Activated T-helper 2 cell treated with anti-CD3 and anti-CD28 coated beads, Interferon-gamma antibody, Interleukin-2, Interleukin-4, amounts not matched to agents 10 μg/mL and 5 μg/mL and 100 μg/mL, durations not matched to agents 14 hours and 24 hours and 36 hours (primary cell): ENCODE measurements at regions of chr6 and their contacts with region 1.

Region 1: GRCh38 chr6:36678518-36679027 is at the start of gene CDKN1A:
- DNase-seq: peak; percentile 76
- H3K4me3 Mint-ChIP-seq: peak within 1 kb of the TSS; percentile 96
- H3K27ac Mint-ChIP-seq: peak within 1 kb of the TSS; percentile 89
- H3K4me1 Mint-ChIP-seq: peaks cover 54% of the 10 kb centered on the region
- H3K27me3 Mint-ChIP-seq: peaks cover 3% of the 10 kb centered on the region
- total RNA-seq, gene CDKN1A: 43.9 and 45.3 TPM in 2 replicates

Region 2: GRCh38 chr6:36423101-36423824 is 255.3 kb before region 1 on chr6:
- intact Hi-C with region 1: loop called (anchors 1 kb)
- DNase-seq: peak; percentile 97
- H3K4me3 Mint-ChIP-seq: peak overlapping the region; percentile 88
- H3K27ac Mint-ChIP-seq: peak overlapping the region; percentile 85
- H3K4me1 Mint-ChIP-seq: peaks cover 15% of the 10 kb centered on the region
- H3K27me3 Mint-ChIP-seq: peaks cover 7% of the 10 kb centered on the region

Region 3: GRCh38 chr6:36546920-36547645 is 131.5 kb before region 1 on chr6 and contains the start of gene STK38:
- intact Hi-C with region 1: loop called (anchors 5 kb)
- DNase-seq: peak; percentile 85
- H3K4me3 Mint-ChIP-seq: peak within 1 kb of the TSS; percentile 98
- H3K27ac Mint-ChIP-seq: peak within 1 kb of the TSS; percentile 95
- H3K4me1 Mint-ChIP-seq: peaks cover 33% of the 10 kb centered on the region
- H3K27me3 Mint-ChIP-seq: no peaks in the 10 kb centered on the region
- total RNA-seq, gene STK38: 22.9 and 25.0 TPM in 2 replicates

Region 4: DNA sequence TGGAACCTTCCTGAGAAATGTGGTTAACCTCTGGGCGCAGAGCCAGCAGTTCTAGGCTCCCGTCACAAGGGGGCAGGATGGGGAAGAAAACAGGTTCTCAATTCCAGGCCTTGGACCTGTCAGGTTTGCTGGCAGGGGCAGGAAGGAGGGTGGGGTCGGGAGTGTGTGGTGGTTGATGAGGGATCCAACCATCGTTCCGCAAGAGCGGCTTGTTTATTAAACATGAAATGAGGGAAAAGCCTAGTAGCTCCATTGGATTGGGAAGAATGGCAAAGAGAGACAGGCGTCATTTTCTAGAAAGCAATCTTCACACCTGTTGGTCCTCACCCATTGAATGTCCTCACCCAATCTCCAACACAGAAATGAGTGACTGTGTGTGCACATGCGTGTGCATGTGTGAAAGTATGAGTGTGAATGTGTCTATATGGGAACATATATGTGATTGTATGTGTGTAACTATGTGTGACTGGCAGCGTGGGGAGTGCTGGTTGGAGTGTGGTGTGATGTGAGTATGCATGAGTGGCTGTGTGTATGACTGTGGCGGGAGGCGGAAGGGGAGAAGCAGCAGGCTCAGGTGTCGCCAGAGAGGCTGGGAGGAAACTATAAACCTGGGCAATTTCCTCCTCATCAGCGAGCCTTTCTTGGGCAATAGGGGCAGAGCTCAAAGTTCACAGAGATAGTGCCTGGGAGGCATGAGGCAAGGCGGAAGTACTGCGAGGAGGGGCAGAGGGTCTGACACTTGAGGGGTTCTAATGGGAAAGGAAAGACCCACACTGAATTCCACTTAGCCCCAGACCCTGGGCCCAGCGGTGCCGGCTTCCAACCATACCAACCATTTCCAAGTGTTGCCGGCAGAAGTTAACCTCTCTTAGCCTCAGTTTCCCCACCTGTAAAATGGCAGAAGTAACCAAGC is 54.8 kb before region 1 on chr6:
- intact Hi-C with region 1: loop called (anchors 1 kb)
- DNase-seq: peak; percentile 68
- H3K4me3 Mint-ChIP-seq: no peak overlapping the region
- H3K27ac Mint-ChIP-seq: no peak overlapping the region
- H3K4me1 Mint-ChIP-seq: peaks cover 22% of the 10 kb centered on the region
- H3K27me3 Mint-ChIP-seq: no peaks in the 10 kb centered on the region

Region 5: GRCh38 chr6:36697481-36697903 is 18.9 kb after region 1 on chr6 and contains the start of gene RAB44:
- intact Hi-C with region 1: loop called (anchors 1 kb)
- DNase-seq: no peak
- H3K4me3 Mint-ChIP-seq: no peak within 1 kb of the TSS
- H3K27ac Mint-ChIP-seq: no peak within 1 kb of the TSS
- H3K4me1 Mint-ChIP-seq: peaks cover 33% of the 10 kb centered on the region
- H3K27me3 Mint-ChIP-seq: peaks cover 7% of the 10 kb centered on the region
- total RNA-seq, gene RAB44: not detected in 2 replicates

Region 6: GRCh38 chr6:36874443-36875249 is 196.1 kb after region 1 on chr6 and contains the start of gene PPIL1:
- intact Hi-C with region 1: loop called (anchors 5 kb)
- DNase-seq: peak; percentile 80
- H3K4me3 Mint-ChIP-seq: peak within 1 kb of the TSS; percentile 99
- H3K27ac Mint-ChIP-seq: peak within 1 kb of the TSS; percentile 100
- H3K4me1 Mint-ChIP-seq: peaks cover 48% of the 10 kb centered on the region
- H3K27me3 Mint-ChIP-seq: peaks cover 3% of the 10 kb centered on the region
- total RNA-seq, gene PPIL1: 52.4 and 54.8 TPM in 2 replicates